SK-N-SH (cell line): ENCODE measurements at regions of chr11 and their contacts with region 1.

Region 1: GRCh38 chr11:76734456-76735420 is 48.4 kb upstream of the TSKU start:
- DNase-seq: no peak
- H3K4me3 ChIP-seq: no peak overlapping the region
- H3K27ac ChIP-seq: peak overlapping the region in 1 of 2 experiments; percentile 3; a peak in 1 of 4 replicates
- H3K4me1 ChIP-seq: peaks cover 0 to 16% of the 10 kb centered on the region in 2 experiments; a peak in 1 of 4 replicates
- H3K27me3 ChIP-seq: peaks cover 6% of the 10 kb centered on the region; the same call in 1 of the 2 replicates
- CTCF ChIP-seq: no peak
- EP300 ChIP-seq: no peak
- RAD21 ChIP-seq: no peak

Region 2: GRCh38 chr11:76706672-76707071 is 28.1 kb before region 1 on chr11:
- CTCF ChIA-PET with region 1: no interaction called
- POLR2A ChIA-PET with region 1: no interaction called
- DNase-seq: no peak
- H3K4me3 ChIP-seq: no peak overlapping the region
- H3K27ac ChIP-seq: no peak overlapping the region
- H3K4me1 ChIP-seq: no peaks in the 10 kb centered on the region; a peak in 1 of 4 replicates
- H3K27me3 ChIP-seq: no peaks in the 10 kb centered on the region
- CTCF ChIP-seq: no peak
- EP300 ChIP-seq: no peak
- RAD21 ChIP-seq: no peak

Region 3: DNA sequence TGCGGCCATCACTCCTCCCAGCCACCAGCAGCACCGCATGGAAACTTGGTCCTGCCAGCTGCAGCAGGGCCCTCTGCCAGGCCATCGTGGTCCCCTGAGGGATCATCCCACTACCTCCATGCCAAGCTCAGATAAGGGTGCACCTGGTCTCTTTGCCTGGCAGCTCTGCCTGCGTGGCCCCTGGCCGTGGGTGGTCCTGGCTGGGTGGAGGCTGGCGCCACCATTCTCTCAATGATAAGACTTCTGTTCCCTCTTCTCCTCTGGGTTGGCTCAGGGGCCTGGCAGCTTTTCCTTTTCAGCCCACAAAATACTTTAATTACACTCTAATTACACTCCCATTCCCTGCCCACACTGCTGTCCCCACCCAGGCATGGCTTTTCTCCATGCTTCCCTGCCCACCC is 21.6 kb after region 1 on chr11:
- CTCF ChIA-PET with region 1: interaction called, 12 read pairs
- POLR2A ChIA-PET with region 1: no interaction called
- DNase-seq: peak; percentile 44
- H3K4me3 ChIP-seq: no peak overlapping the region
- H3K27ac ChIP-seq: no peak overlapping the region; a peak in 1 of 4 replicates
- H3K4me1 ChIP-seq: peaks cover 0 to 8% of the 10 kb centered on the region in 2 experiments; a peak in 1 of 4 replicates
- H3K27me3 ChIP-seq: no peaks in the 10 kb centered on the region; the same call in 1 of the 2 replicates
- CTCF ChIP-seq: no peak
- EP300 ChIP-seq: no peak
- RAD21 ChIP-seq: no peak

Region 4: GRCh38 chr11:76782526-76783293 is 48.0 kb after region 1 on chr11:
- CTCF ChIA-PET with region 1: interaction called, 18 read pairs
- POLR2A ChIA-PET with region 1: no interaction called
- DNase-seq: peak; percentile 94
- H3K4me3 ChIP-seq: peak overlapping the region; percentile 90 to 93
- H3K27ac ChIP-seq: peak overlapping the region; percentile 63 to 97; a peak in 3 of 4 replicates
- H3K4me1 ChIP-seq: peaks cover 18 to 56% of the 10 kb centered on the region in 2 experiments; a peak in 3 of 4 replicates
- H3K27me3 ChIP-seq: no peaks in the 10 kb centered on the region
- CTCF ChIP-seq: no peak
- EP300 ChIP-seq: peak in 1 of 2 experiments; percentile 66; a peak in 1 of 4 replicates
- RAD21 ChIP-seq: no peak

Region 5: GRCh38 chr11:76799066-76799804 is 64.5 kb after region 1 on chr11:
- CTCF ChIA-PET with region 1: interaction called, 205 read pairs
- POLR2A ChIA-PET with region 1: no interaction called
- DNase-seq: peak; percentile 97
- H3K4me3 ChIP-seq: peak overlapping the region in 1 of 2 experiments; percentile 46; a peak in 1 of 4 replicates
- H3K27ac ChIP-seq: no peak overlapping the region; a peak in 1 of 4 replicates
- H3K4me1 ChIP-seq: peaks cover 0 to 9% of the 10 kb centered on the region in 2 experiments; a peak in 1 of 4 replicates
- H3K27me3 ChIP-seq: no peaks in the 10 kb centered on the region
- CTCF ChIP-seq: peak; percentile 80
- EP300 ChIP-seq: no peak
- RAD21 ChIP-seq: peak; percentile 83

Region 6: DNA sequence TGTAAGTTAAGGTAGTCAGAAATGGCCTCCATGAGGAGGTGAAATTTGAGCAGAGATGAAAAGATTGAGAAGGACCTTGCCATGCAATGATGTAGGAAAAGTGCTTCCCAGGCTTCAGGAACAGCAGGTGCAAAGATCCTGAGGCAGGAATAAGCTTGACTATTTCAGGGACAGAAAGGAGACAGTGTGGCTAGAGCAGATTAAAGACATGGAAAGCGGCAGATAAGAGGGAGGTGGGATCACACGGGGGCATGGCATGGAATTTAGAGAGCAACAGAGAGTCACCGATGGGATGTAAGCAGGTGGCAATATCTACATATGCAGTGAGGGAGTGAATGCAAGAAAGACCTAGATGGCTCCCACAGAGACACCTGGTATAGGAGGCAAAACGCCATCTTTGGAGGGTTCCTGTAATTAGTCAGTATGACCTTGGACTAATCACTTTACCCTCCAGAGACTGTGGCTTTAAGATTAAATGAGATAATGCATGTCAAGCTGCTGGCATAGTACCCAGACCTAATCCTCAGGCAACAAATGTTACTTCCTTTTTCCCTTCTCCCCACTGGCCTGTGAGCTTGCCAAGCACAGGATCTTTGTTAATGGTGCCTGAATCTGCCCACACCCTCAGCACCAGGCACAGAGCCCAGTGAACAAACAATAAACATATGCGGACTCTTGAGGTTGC is 101.3 kb after region 1 on chr11:
- CTCF ChIA-PET with region 1: interaction called, 10 read pairs
- POLR2A ChIA-PET with region 1: no interaction called
- DNase-seq: no peak
- H3K4me3 ChIP-seq: no peak overlapping the region
- H3K27ac ChIP-seq: no peak overlapping the region
- H3K4me1 ChIP-seq: peaks cover under 1 to 15% of the 10 kb centered on the region in 2 experiments; a peak in 2 of 4 replicates
- H3K27me3 ChIP-seq: peaks cover 38% of the 10 kb centered on the region; the same call in 1 of the 2 replicates
- CTCF ChIP-seq: no peak
- EP300 ChIP-seq: no peak
- RAD21 ChIP-seq: no peak

Region 7: GRCh38 chr11:77047007-77047927 is 312.5 kb after region 1 on chr11:
- CTCF ChIA-PET with region 1: interaction called, 21 read pairs
- POLR2A ChIA-PET with region 1: no interaction called
- DNase-seq: peak; percentile 82
- H3K4me3 ChIP-seq: peak overlapping the region; percentile 34 to 67
- H3K27ac ChIP-seq: peak overlapping the region in 1 of 2 experiments; percentile 48; a peak in 1 of 4 replicates
- H3K4me1 ChIP-seq: peaks cover 3 to 6% of the 10 kb centered on the region in 2 experiments; a peak in 2 of 4 replicates
- H3K27me3 ChIP-seq: no peaks in the 10 kb centered on the region
- CTCF ChIP-seq: peak; percentile 79
- EP300 ChIP-seq: no peak
- RAD21 ChIP-seq: peak; percentile 74